ENCODE measurements at regions of chrX and their contacts with region 1.

Region 1: GRCh38 chrX:130339408-130340222 is at the start of gene SLC25A14:
- DNase-seq: peak; percentile 89 to 90
- H3K4me3 ChIP-seq: peak within 1 kb of the TSS; percentile 58
- H3K4me1 ChIP-seq: peaks cover 3% of the 10 kb centered on the region; the same call in 1 of the 2 replicates
- H3K27me3 ChIP-seq: no peaks in the 10 kb centered on the region

Region 2: GRCh38 chrX:130173190-130173895 is 166.3 kb before region 1 on chrX:
- in situ Hi-C with region 1: no loop called
- DNase-seq: peak in 1 of 2 experiments; percentile 2
- H3K4me3 ChIP-seq: no peak overlapping the region
- H3K4me1 ChIP-seq: peaks cover 17% of the 10 kb centered on the region
- H3K27me3 ChIP-seq: no peaks in the 10 kb centered on the region

Region 3: DNA sequence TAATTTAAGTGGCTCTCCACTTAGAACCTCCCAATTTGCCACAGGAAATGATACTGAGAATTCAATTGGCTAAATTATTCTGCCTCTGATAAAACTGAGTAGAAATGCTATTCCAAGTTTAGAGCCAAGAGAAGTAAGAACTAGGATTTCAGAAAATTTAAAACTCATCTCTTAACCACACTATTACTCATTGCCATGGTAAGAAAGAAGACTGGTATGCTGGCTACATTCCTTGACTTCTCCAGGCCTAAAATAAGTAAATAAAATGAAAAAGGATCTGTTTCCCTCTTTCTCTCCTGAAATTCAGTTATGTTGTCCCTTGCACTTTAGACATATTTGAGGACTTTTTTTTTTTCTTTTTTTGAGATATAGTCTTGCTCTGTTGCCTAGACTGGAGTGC is 94.2 kb before region 1 on chrX:
- in situ Hi-C with region 1: loop called (anchors 10 kb)
- DNase-seq: no peak
- H3K4me3 ChIP-seq: no peak overlapping the region
- H3K4me1 ChIP-seq: no peaks in the 10 kb centered on the region
- H3K27me3 ChIP-seq: no peaks in the 10 kb centered on the region